Activated T-helper 2 cell treated with anti-CD3 and anti-CD28 coated beads, Interferon-gamma antibody, Interleukin-2, Interleukin-4, amounts not matched to agents 10 μg/mL and 5 μg/mL and 100 μg/mL, durations not matched to agents 14 hours and 24 hours and 36 hours (primary cell): ENCODE measurements at regions of chr1 and their contacts with region 1.

Region 1: GRCh38 chr1:197868751-197869489 is 33.5 kb upstream of the C1orf53 start:
- DNase-seq: peak; percentile 15
- H3K4me3 Mint-ChIP-seq: no peak overlapping the region
- H3K27ac Mint-ChIP-seq: no peak overlapping the region
- H3K4me1 Mint-ChIP-seq: peaks cover 5% of the 10 kb centered on the region
- H3K27me3 Mint-ChIP-seq: peaks cover 47% of the 10 kb centered on the region

Region 2: GRCh38 chr1:197521118-197521739 is 347.7 kb before region 1 on chr1:
- intact Hi-C with region 1: loop called (anchors 2 kb)
- DNase-seq: no peak
- H3K4me3 Mint-ChIP-seq: no peak overlapping the region
- H3K27ac Mint-ChIP-seq: no peak overlapping the region
- H3K4me1 Mint-ChIP-seq: peaks cover 5% of the 10 kb centered on the region
- H3K27me3 Mint-ChIP-seq: no peaks in the 10 kb centered on the region

Region 3: DNA sequence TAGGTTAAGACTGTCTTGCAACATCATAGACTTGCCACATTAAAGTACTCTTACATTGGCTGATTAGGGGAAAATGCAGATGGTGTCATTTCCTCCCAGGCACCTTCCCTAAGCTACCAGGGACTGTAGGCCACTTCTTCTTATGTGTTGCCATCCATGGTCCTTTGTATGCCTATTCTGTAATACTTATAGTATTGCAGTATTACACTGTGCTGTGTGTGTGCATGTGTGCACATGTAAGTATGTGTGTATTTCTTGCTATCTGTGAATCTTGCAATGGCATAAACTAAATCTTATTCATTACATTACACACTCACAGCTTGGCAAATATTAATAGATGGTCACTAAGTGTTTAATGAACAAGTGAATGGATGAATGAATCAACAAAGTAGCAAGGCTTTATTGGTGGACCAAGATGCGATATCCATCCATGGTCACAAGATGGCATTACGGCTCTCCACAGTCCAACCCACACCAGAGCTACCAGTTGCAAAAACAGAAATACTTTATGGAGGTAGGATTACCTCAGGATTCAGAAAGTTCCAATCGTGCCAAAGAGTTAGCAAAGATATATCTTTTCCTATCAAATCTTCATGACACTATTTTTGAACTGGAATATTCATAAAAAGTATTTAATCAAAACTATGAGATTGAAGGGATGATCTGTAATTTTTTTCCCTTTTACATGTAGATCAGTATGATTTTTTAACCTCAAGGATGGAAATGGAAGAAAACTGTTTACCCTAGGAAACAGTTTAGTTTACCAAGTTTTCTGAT is 253.8 kb before region 1 on chr1:
- intact Hi-C with region 1: loop called (anchors 1 kb)
- DNase-seq: no peak
- H3K4me3 Mint-ChIP-seq: no peak overlapping the region
- H3K27ac Mint-ChIP-seq: no peak overlapping the region
- H3K4me1 Mint-ChIP-seq: no peaks in the 10 kb centered on the region
- H3K27me3 Mint-ChIP-seq: no peaks in the 10 kb centered on the region